Pancreas (tissue), 10 donors: ENCODE measurements at regions of chr5 and their contacts with region 1.

Region 1: DNA sequence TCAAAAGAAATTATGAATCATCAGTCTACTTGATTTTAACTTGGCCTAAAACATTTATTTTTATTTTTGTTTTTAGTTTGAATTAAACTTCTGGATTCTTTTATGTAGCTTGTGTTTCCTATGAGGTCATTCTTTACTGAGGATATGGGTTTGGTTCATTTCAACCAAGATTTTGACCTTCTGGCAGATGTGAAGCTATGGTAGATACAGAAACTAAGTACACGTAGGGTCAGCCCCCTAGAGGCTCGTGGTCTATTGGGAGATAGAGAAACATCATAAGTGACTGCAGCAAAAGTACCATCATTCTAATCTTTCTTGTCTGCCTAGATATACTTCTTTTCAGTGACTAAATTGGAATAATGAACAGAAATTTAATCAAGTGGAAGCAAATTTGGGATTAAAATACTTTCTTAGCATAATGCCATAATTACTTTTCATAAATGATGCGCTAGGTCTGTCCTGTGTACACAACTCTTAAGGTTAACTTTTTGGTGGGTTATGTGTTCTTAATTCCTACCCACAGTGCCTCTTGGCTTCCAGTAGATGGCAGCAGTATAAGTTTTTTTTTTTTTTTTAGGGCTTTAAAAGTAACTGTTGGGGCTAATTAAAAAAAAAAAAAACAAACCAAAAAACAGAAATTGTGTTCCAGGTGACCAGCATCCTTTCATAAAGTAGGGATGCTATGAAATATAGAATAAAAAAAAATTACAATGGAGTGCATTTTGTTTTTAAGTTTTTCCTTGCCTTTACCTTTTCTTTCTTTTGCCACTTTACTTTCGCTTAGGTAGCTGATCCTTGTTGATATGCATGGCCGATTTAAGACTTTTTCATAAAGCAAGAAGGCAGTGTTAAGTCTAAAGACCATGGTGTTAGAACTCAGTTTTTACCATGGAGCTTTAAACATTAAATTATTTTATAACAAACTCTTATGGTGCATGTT is 49.9 kb downstream of the LRRTM2 start:
- DNase-seq: no peak
- ATAC-seq: peak in 3 of 4 donors; percentile 60 to 72 (median 60)
- H3K4me3 ChIP-seq: no peak overlapping the region
- H3K27ac ChIP-seq: no peak overlapping the region
- H3K4me1 ChIP-seq: peaks cover 0 to 12% (median 0%) of the 10 kb centered on the region in 3 donors
- H3K27me3 ChIP-seq: no peaks in the 10 kb centered on the region
- CTCF ChIP-seq: peak in 3 of 4 donors; percentile 12 to 48 (median 43)

Region 2: GRCh38 chr5:138686668-138687067 is 138.5 kb before region 1 on chr5:
- intact Hi-C with region 1: no loop called
- DNase-seq: no peak
- ATAC-seq: no peak
- H3K4me3 ChIP-seq: no peak overlapping the region
- H3K27ac ChIP-seq: no peak overlapping the region
- H3K4me1 ChIP-seq: no peaks in the 10 kb centered on the region
- H3K27me3 ChIP-seq: no peaks in the 10 kb centered on the region
- CTCF ChIP-seq: no peak

Region 3: DNA sequence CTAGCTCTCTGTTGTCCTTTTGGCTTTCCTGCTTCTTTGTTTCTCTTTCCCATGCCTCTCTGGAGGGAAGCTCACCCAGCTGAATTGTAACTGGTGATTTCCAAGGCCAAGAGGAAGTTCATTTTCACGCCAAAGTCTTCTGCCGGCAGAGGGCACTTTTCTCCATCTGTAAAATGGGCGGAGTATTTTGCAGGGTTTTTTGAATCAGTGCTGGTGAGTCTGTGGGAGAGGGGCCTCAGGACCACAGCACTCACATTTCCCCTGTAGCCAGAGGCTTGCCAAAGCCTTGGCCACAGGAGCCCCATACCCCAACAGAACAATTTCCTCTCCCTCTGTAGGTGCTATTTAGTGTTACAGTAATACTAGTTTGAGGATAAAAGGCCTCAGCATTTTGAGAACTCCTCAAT is 426.1 kb after region 1 on chr5:
- intact Hi-C with region 1: loop called in 1 of 3 experiments (anchors 10 kb)
- DNase-seq: no peak
- ATAC-seq: peak in 1 of 4 donors; percentile 20
- H3K4me3 ChIP-seq: no peak overlapping the region
- H3K27ac ChIP-seq: no peak overlapping the region
- H3K4me1 ChIP-seq: no peaks in the 10 kb centered on the region
- H3K27me3 ChIP-seq: no peaks in the 10 kb centered on the region
- CTCF ChIP-seq: no peak